ENCODE measurements at regions of chr6 and their contacts with region 1.

Region 1: GRCh38 chr6:166627033-166627874 is at the start of gene RPS6KA2:
- DNase-seq: peak; percentile 100
- H3K4me3 ChIP-seq: peak within 1 kb of the TSS; percentile 52 to 92 (median 85)
- H3K27ac ChIP-seq: peak within 1 kb of the TSS; percentile 89 to 97 (median 93)
- H3K4me1 ChIP-seq: peaks cover 0 to 47% (median 33%) of the 10 kb centered on the region in 4 donors
- H3K27me3 ChIP-seq: no peaks in the 10 kb centered on the region
- CTCF ChIP-seq: no peak
- EP300 ChIP-seq: no peak
- POLR2A ChIP-seq: peak; percentile 82 to 88
- total RNA-seq, gene RPS6KA2: 27.8 to 44.7 (median 32.3) TPM

Region 2: DNA sequence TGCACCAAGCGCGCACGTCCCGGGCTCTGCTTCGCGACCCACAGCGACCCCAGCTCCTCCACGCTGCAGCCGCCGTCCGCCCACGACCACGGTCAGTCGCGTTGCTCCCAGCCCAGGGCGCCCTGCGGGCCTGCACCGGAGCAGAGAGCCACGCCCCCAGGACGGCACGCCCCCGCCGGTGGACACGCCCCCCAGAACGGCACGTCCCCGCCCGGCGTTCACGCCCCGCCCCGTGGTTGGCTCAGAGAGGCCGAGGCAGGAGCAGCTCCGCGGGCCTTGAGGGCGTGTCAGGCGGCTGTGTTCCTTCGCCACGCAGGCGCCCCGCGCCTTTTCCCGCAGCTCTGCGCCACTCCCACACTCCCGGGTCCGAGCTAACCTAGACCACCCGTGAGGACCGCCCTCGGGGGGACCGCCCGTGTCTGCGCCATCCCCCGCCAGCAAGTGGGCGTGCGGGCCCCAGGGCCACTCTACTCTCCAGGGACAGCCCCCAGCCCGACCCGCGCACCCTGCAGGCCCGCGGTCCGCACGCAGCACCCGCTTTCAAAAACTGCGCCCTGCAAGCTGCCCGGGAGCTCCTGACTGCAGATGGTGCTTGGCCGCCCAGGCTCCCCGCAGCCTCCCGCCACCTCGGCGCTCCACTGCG is 329.3 kb after region 1 on chr6 and contains the start of gene RNASET2:
- intact Hi-C with region 1: loop called (anchors 5 kb)
- DNase-seq: peak; percentile 98
- H3K4me3 ChIP-seq: peak within 1 kb of the TSS; percentile 63 to 97 (median 78)
- H3K27ac ChIP-seq: peak within 1 kb of the TSS; percentile 82 to 90 (median 88)
- H3K4me1 ChIP-seq: peaks cover 0 to 21% (median 17%) of the 10 kb centered on the region in 4 donors
- H3K27me3 ChIP-seq: no peaks in the 10 kb centered on the region
- CTCF ChIP-seq: no peak
- EP300 ChIP-seq: no peak
- POLR2A ChIP-seq: peak; percentile 56 to 84
- total RNA-seq, gene RNASET2: 41.0 to 53.1 (median 42.5) TPM